CD8-positive, alpha-beta memory T cell (primary cell): ENCODE measurements at regions of chr1 and their contacts with region 1.

Region 1: GRCh38 chr1:93061895-93062792 is 16.9 kb upstream of the MTF2 start:
- DNase-seq: peak; percentile 9 to 63 (median 33)
- H3K4me3 ChIP-seq: no peak overlapping the region
- H3K4me3 Mint-ChIP-seq: no peak overlapping the region
- H3K27ac ChIP-seq: no peak overlapping the region
- H3K27ac Mint-ChIP-seq: peak overlapping the region in 1 of 8 donors; percentile 6
- H3K4me1 ChIP-seq: no peaks in the 10 kb centered on the region
- H3K4me1 Mint-ChIP-seq: no peaks in the 10 kb centered on the region
- H3K27me3 ChIP-seq: no peaks in the 10 kb centered on the region
- H3K27me3 Mint-ChIP-seq: peaks cover 23 to 47% of the 10 kb centered on the region in 2 donors

Region 2: GRCh38 chr1:93021539-93022134 is 40.5 kb before region 1 on chr1:
- CTCF ChIA-PET with region 1: interaction called, 25 read pairs
- POLR2A ChIA-PET with region 1: no interaction called
- DNase-seq: peak in 2 of 5 donors; percentile 52 to 53
- H3K4me3 ChIP-seq: no peak overlapping the region
- H3K4me3 Mint-ChIP-seq: no peak overlapping the region
- H3K27ac ChIP-seq: no peak overlapping the region
- H3K27ac Mint-ChIP-seq: no peak overlapping the region
- H3K4me1 ChIP-seq: no peaks in the 10 kb centered on the region
- H3K4me1 Mint-ChIP-seq: peaks cover 5% of the 10 kb centered on the region in 3 donors
- H3K27me3 ChIP-seq: no peaks in the 10 kb centered on the region
- H3K27me3 Mint-ChIP-seq: peaks cover 1 to 24% of the 10 kb centered on the region in 2 donors

Region 3: GRCh38 chr1:93171549-93172034 is 109.4 kb after region 1 on chr1:
- CTCF ChIA-PET with region 1: no interaction called
- POLR2A ChIA-PET with region 1: no interaction called
- DNase-seq: no peak
- H3K4me3 ChIP-seq: peak overlapping the region; percentile 37
- H3K4me3 Mint-ChIP-seq: peak overlapping the region; percentile 78 to 87 (median 83)
- H3K27ac ChIP-seq: no peak overlapping the region
- H3K27ac Mint-ChIP-seq: peak overlapping the region; percentile 15 to 90 (median 72)
- H3K4me1 ChIP-seq: peaks cover 43% of the 10 kb centered on the region
- H3K4me1 Mint-ChIP-seq: peaks cover 72 to 87% (median 82%) of the 10 kb centered on the region in 3 donors
- H3K27me3 ChIP-seq: no peaks in the 10 kb centered on the region
- H3K27me3 Mint-ChIP-seq: no peaks in the 10 kb centered on the region